Naive thymus-derived CD4-positive, alpha-beta T cell (primary cell): ENCODE measurements at regions of chr2 and their contacts with region 1.

Region 1: GRCh38 chr2:20291106-20291564 is 59.5 kb downstream of the PUM2 start:
- DNase-seq: peak in 2 of 9 donors; percentile 10 to 25
- ATAC-seq: peak; percentile 77
- H3K4me3 ChIP-seq: no peak overlapping the region
- H3K4me3 Mint-ChIP-seq: no peak overlapping the region
- H3K27ac ChIP-seq: no peak overlapping the region
- H3K27ac Mint-ChIP-seq: peak overlapping the region in 5 of 9 donors; percentile 6 to 71 (median 46)
- H3K4me1 ChIP-seq: peaks cover 0 to 3% of the 10 kb centered on the region in 2 donors
- H3K4me1 Mint-ChIP-seq: peaks cover 0 to 18% (median 9%) of the 10 kb centered on the region in 7 donors
- H3K27me3 ChIP-seq: no peaks in the 10 kb centered on the region
- H3K27me3 Mint-ChIP-seq: no peaks in the 10 kb centered on the region

Region 2: GRCh38 chr2:20172273-20173055 is 118.7 kb before region 1 on chr2:
- CTCF ChIA-PET with region 1: no interaction called
- POLR2A ChIA-PET with region 1: no interaction called
- intact Hi-C with region 1: no loop called
- DNase-seq: no peak
- ATAC-seq: no peak
- H3K4me3 ChIP-seq: no peak overlapping the region
- H3K4me3 Mint-ChIP-seq: no peak overlapping the region
- H3K27ac ChIP-seq: no peak overlapping the region
- H3K27ac Mint-ChIP-seq: no peak overlapping the region
- H3K4me1 ChIP-seq: no peaks in the 10 kb centered on the region
- H3K4me1 Mint-ChIP-seq: no peaks in the 10 kb centered on the region
- H3K27me3 ChIP-seq: no peaks in the 10 kb centered on the region
- H3K27me3 Mint-ChIP-seq: peaks cover 0 to 9% (median 4%) of the 10 kb centered on the region in 5 donors

Region 3: GRCh38 chr2:20212459-20212870 is 78.7 kb before region 1 on chr2:
- CTCF ChIA-PET with region 1: no interaction called
- POLR2A ChIA-PET with region 1: no interaction called
- intact Hi-C with region 1: no loop called
- DNase-seq: no peak
- ATAC-seq: no peak
- H3K4me3 ChIP-seq: no peak overlapping the region
- H3K4me3 Mint-ChIP-seq: no peak overlapping the region
- H3K27ac ChIP-seq: no peak overlapping the region
- H3K27ac Mint-ChIP-seq: no peak overlapping the region
- H3K4me1 ChIP-seq: no peaks in the 10 kb centered on the region
- H3K4me1 Mint-ChIP-seq: peaks cover 0 to 2% (median 0%) of the 10 kb centered on the region in 7 donors
- H3K27me3 ChIP-seq: no peaks in the 10 kb centered on the region
- H3K27me3 Mint-ChIP-seq: peaks cover 0 to 6% (median 0%) of the 10 kb centered on the region in 5 donors

Region 4: GRCh38 chr2:20273045-20273444 is 18.1 kb before region 1 on chr2:
- CTCF ChIA-PET with region 1: interaction called, 5 read pairs
- POLR2A ChIA-PET with region 1: no interaction called
- intact Hi-C with region 1: loop called in 1 of 2 experiments (anchors 1 kb)
- DNase-seq: no peak
- ATAC-seq: no peak
- H3K4me3 ChIP-seq: no peak overlapping the region
- H3K4me3 Mint-ChIP-seq: no peak overlapping the region
- H3K27ac ChIP-seq: no peak overlapping the region
- H3K27ac Mint-ChIP-seq: peak overlapping the region in 3 of 9 donors; percentile 2 to 64 (median 17)
- H3K4me1 ChIP-seq: no peaks in the 10 kb centered on the region
- H3K4me1 Mint-ChIP-seq: peaks cover 4 to 32% (median 21%) of the 10 kb centered on the region in 7 donors
- H3K27me3 ChIP-seq: no peaks in the 10 kb centered on the region
- H3K27me3 Mint-ChIP-seq: no peaks in the 10 kb centered on the region

Region 5: DNA sequence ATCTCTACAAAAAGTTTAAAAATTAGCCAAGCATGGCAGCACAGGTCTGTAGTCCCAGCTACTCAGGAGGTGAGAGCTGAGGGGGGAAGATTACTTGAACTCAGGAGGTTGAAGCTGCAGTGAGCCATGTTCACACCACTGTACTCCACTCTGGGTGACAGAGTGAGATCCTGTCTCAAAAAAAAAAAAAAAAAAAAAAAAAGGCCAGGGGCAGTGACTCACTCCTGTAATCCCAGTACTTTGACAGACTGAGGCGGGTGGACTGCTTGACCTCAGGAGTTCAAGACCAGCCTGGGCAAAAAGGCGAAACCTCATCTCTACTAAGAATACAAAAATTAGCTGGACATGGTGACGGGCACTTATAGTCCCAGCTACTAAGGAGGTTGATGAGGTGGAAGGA is 22.5 kb after region 1 on chr2:
- CTCF ChIA-PET with region 1: no interaction called
- POLR2A ChIA-PET with region 1: no interaction called
- intact Hi-C with region 1: loop called in 1 of 2 experiments (anchors 2 kb)
- DNase-seq: no peak
- ATAC-seq: no peak
- H3K4me3 ChIP-seq: no peak overlapping the region
- H3K4me3 Mint-ChIP-seq: no peak overlapping the region
- H3K27ac ChIP-seq: no peak overlapping the region
- H3K27ac Mint-ChIP-seq: peak overlapping the region in 2 of 9 donors; percentile 10 to 25
- H3K4me1 ChIP-seq: peaks cover 10 to 14% of the 10 kb centered on the region in 2 donors
- H3K4me1 Mint-ChIP-seq: peaks cover 7 to 54% (median 43%) of the 10 kb centered on the region in 7 donors
- H3K27me3 ChIP-seq: no peaks in the 10 kb centered on the region
- H3K27me3 Mint-ChIP-seq: no peaks in the 10 kb centered on the region

Region 6: GRCh38 chr2:20326163-20326780 is 35.1 kb after region 1 on chr2:
- CTCF ChIA-PET with region 1: no interaction called
- POLR2A ChIA-PET with region 1: no interaction called
- intact Hi-C with region 1: no loop called
- DNase-seq: peak in 8 of 9 donors; percentile 22 to 55 (median 39)
- ATAC-seq: peak; percentile 93
- H3K4me3 ChIP-seq: no peak overlapping the region
- H3K4me3 Mint-ChIP-seq: peak overlapping the region in 6 of 10 donors; percentile 1 to 44 (median 14)
- H3K27ac ChIP-seq: no peak overlapping the region
- H3K27ac Mint-ChIP-seq: peak overlapping the region in 6 of 9 donors; percentile 0 to 85 (median 42)
- H3K4me1 ChIP-seq: peaks cover 6 to 8% of the 10 kb centered on the region in 2 donors
- H3K4me1 Mint-ChIP-seq: peaks cover 59 to 92% (median 85%) of the 10 kb centered on the region in 7 donors
- H3K27me3 ChIP-seq: no peaks in the 10 kb centered on the region
- H3K27me3 Mint-ChIP-seq: no peaks in the 10 kb centered on the region